CD4-positive, alpha-beta memory T cell (primary cell): ENCODE measurements at regions of chr11 and their contacts with region 1.

Region 1: DNA sequence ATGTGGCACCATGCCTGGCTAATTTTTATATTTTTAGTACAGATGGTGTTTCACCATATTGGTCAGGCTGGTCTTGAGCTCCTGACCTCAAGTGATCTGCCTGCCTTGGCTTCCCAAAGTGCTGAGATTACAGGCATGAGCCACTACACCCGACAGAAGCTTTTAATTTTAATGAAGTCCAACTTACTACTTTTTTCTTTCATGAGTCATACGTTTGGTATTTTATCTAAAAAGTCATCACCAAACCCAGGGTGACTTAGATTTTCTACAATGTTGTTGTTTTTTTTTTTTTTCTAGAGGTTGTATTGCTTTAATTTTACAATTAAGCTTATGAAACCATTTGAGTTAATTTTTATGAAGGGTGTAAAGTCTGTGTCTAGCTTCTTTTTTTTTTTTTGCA is 34.9 kb downstream of the JRKL start:
- DNase-seq: no peak
- H3K4me3 ChIP-seq: no peak overlapping the region
- H3K4me3 Mint-ChIP-seq: no peak overlapping the region
- H3K27ac ChIP-seq: no peak overlapping the region
- H3K27ac Mint-ChIP-seq: no peak overlapping the region
- H3K4me1 ChIP-seq: no peaks in the 10 kb centered on the region
- H3K4me1 Mint-ChIP-seq: peaks cover 0 to 3% (median under 1%) of the 10 kb centered on the region in 4 donors
- H3K27me3 ChIP-seq: peaks cover 4% of the 10 kb centered on the region
- H3K27me3 Mint-ChIP-seq: peaks cover 29 to 31% of the 10 kb centered on the region in 2 donors

Region 2: DNA sequence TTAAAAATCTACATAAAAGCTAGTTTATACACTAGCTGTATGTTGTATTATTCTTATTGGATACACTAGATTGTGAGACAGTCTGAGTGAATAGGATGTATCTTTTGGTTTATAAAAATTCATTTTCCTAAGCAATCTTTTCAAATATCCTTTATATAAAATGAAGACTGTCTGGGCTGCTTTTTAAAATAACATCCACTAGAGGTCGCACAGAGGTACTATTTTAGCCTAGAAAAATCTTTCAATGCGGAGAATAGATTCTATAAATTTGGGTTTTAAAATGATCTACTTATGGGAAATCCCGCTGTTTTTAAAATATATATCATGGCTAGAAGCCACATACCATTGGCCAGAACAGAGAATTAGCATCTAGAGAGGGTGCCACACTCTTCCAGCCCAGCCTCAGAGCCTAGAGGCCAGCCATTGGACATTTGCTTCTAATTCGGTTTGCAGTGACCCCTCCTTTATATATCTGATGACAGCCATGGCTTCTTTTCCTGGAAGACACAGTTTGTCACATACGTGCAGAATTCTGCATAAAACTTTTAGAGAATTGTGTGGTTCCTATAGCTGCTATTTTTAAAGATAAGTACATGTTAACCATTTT is 1905.1 kb before region 1 on chr11:
- CTCF ChIA-PET with region 1: no interaction called
- POLR2A ChIA-PET with region 1: no interaction called
- intact Hi-C with region 1: loop called (anchors 1 kb)
- DNase-seq: peak in 4 of 5 donors; percentile 16 to 34 (median 25)
- H3K4me3 ChIP-seq: no peak overlapping the region
- H3K4me3 Mint-ChIP-seq: no peak overlapping the region
- H3K27ac ChIP-seq: no peak overlapping the region
- H3K27ac Mint-ChIP-seq: no peak overlapping the region
- H3K4me1 ChIP-seq: no peaks in the 10 kb centered on the region
- H3K4me1 Mint-ChIP-seq: no peaks in the 10 kb centered on the region
- H3K27me3 ChIP-seq: no peaks in the 10 kb centered on the region
- H3K27me3 Mint-ChIP-seq: peaks cover 8 to 9% of the 10 kb centered on the region in 2 donors

Region 3: GRCh38 chr11:94786264-94787126 is 1638.2 kb before region 1 on chr11:
- CTCF ChIA-PET with region 1: interaction called, 3 read pairs
- POLR2A ChIA-PET with region 1: no interaction called
- intact Hi-C with region 1: loop called (anchors 5 kb)
- DNase-seq: peak in 3 of 5 donors; percentile 15 to 21 (median 16)
- H3K4me3 ChIP-seq: no peak overlapping the region
- H3K4me3 Mint-ChIP-seq: no peak overlapping the region
- H3K27ac ChIP-seq: no peak overlapping the region
- H3K27ac Mint-ChIP-seq: no peak overlapping the region
- H3K4me1 ChIP-seq: no peaks in the 10 kb centered on the region
- H3K4me1 Mint-ChIP-seq: no peaks in the 10 kb centered on the region
- H3K27me3 ChIP-seq: peaks cover 4% of the 10 kb centered on the region
- H3K27me3 Mint-ChIP-seq: peaks cover 9 to 11% of the 10 kb centered on the region in 2 donors

Region 4: GRCh38 chr11:95835768-95836488 is 588.8 kb before region 1 on chr11:
- CTCF ChIA-PET with region 1: interaction called, 28 read pairs
- POLR2A ChIA-PET with region 1: no interaction called
- intact Hi-C with region 1: loop called (anchors 1 kb)
- DNase-seq: peak; percentile 55 to 64 (median 55)
- H3K4me3 ChIP-seq: no peak overlapping the region
- H3K4me3 Mint-ChIP-seq: no peak overlapping the region
- H3K27ac ChIP-seq: no peak overlapping the region
- H3K27ac Mint-ChIP-seq: peak overlapping the region in 4 of 7 donors; percentile 1 to 75 (median 51)
- H3K4me1 ChIP-seq: no peaks in the 10 kb centered on the region
- H3K4me1 Mint-ChIP-seq: peaks cover 0 to 3% (median 1%) of the 10 kb centered on the region in 4 donors
- H3K27me3 ChIP-seq: no peaks in the 10 kb centered on the region
- H3K27me3 Mint-ChIP-seq: no peaks in the 10 kb centered on the region

Region 5: DNA sequence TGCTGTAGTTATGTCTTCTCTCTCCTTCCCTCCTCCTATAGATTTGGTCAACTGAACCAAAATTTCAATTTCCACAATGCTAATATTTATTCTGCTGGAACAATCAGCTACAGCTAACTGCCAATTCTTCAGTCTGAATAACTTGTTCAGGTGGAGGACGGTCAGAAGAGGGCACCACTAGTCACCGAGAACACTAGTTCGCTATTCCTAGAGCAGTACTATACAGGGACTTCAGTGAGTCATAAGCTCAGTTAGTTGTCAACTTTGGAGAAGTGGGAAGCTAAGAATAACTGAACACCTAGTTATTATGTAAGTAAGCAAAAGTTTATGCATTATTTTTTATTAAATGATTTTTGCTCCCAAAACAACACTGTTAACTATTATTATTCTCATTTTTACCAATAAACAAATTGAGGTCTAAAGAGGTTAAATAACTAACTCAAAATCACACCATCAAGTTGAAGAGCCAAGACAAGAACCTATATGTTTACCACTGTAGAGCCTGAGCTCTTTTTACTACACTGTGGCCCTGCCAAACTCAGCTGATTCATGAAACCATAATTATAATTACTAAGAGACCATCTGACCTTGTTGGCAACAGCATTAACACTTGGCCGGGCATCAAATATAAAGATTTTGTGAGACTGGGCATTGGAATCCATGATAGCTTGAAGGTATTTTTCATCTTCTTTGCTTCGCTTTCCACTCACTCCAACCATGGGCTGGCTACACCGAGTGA is 575.4 kb before region 1 on chr11:
- CTCF ChIA-PET with region 1: interaction called, 24 read pairs
- POLR2A ChIA-PET with region 1: no interaction called
- intact Hi-C with region 1: no loop called
- DNase-seq: peak in 1 of 5 donors; percentile 16
- H3K4me3 ChIP-seq: no peak overlapping the region
- H3K4me3 Mint-ChIP-seq: no peak overlapping the region
- H3K27ac ChIP-seq: no peak overlapping the region
- H3K27ac Mint-ChIP-seq: peak overlapping the region in 1 of 7 donors; percentile 67
- H3K4me1 ChIP-seq: no peaks in the 10 kb centered on the region
- H3K4me1 Mint-ChIP-seq: no peaks in the 10 kb centered on the region
- H3K27me3 ChIP-seq: no peaks in the 10 kb centered on the region
- H3K27me3 Mint-ChIP-seq: no peaks in the 10 kb centered on the region

Region 6: DNA sequence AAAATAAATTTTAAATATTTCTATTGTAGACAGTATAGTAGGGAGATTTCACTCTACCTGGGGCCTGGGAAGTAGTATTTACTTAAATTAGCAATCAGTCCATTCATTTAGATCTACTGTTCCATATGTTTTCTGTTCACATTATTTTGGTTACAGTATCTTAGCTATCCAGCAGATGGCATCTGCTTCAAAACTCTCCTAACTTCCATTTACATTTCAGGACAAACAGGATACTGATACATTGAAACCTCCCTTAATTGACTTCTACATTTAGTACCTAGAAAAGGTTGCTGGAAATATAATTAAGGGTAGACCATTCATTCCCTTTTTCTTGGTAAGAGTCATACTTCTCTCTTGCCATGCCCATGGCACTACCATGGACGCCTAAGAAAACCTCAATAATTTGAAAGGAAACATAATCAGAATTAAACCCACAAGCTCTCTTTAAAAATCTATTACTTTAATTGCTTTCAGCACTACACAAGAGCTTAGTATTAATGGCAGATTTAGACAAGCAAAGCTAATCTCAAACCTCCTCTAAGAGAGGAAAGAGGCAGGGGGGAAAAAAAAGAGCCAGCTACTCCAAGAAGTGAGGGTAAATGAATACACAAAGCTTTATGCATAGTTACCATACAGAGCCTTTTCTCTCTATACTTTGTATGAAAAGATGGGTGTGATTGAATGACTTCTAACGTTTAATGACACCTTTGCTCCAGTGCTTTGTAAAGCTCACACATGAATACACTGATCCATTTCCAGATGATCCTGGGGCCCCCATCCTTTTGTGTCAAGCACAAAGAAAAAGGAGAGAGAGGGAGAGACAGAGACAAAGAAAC is 369.6 kb before region 1 on chr11:
- CTCF ChIA-PET with region 1: interaction called, 6 read pairs
- POLR2A ChIA-PET with region 1: no interaction called
- intact Hi-C with region 1: loop called (anchors 1 kb)
- DNase-seq: peak in 4 of 5 donors; percentile 31 to 41 (median 36)
- H3K4me3 ChIP-seq: no peak overlapping the region
- H3K4me3 Mint-ChIP-seq: no peak overlapping the region
- H3K27ac ChIP-seq: no peak overlapping the region
- H3K27ac Mint-ChIP-seq: peak overlapping the region in 5 of 7 donors; percentile 19 to 81 (median 65)
- H3K4me1 ChIP-seq: no peaks in the 10 kb centered on the region
- H3K4me1 Mint-ChIP-seq: peaks cover 23 to 40% (median 39%) of the 10 kb centered on the region in 4 donors
- H3K27me3 ChIP-seq: no peaks in the 10 kb centered on the region
- H3K27me3 Mint-ChIP-seq: no peaks in the 10 kb centered on the region